ENCODE measurements at regions of chr2 and their contacts with region 1.

Region 1: DNA sequence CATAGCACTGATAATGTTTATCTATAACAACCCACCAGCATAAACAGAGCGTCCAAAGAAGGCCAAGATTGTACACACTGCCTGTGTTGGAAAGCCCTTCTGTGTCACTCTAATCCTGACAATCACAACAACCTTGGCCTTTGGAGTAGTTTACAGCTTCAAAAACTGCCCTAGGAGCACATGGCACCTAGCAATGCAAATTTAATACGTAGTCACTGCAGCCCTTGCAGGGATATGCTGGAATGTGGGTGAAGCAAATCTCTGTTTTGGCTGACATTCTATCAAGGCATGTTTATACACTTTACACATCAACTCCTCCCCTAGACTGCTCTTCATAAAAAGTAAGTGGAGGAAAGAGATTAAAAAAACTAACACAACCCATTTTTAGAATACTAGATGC is 66.8 kb downstream of the GRB14 start:
- DNase-seq: no peak
- ATAC-seq: no peak

Region 2: GRCh38 chr2:164015328-164016123 is 539.0 kb before region 1 on chr2:
- intact Hi-C with region 1: no loop called
- DNase-seq: no peak
- ATAC-seq: no peak

Region 3: DNA sequence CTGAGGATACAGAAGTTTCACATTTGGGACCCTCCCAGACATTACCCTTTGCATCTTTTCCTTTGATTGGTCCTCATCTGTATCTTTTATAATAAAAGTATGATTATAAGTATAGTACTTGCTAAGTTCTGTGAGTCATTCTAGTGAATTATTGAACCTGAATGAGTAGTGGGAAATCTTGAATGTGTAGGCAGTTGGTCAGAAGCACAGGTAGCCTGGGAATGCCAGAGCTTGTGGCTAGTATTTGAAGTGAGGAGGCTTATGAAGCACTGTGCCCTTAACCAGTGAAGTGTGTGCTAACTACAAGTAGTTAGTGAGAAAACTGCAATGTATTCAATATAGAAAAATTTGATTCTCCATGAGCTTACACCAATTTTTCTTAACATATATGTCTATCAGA is 190.8 kb before region 1 on chr2:
- intact Hi-C with region 1: no loop called
- DNase-seq: no peak
- ATAC-seq: no peak

Region 4: DNA sequence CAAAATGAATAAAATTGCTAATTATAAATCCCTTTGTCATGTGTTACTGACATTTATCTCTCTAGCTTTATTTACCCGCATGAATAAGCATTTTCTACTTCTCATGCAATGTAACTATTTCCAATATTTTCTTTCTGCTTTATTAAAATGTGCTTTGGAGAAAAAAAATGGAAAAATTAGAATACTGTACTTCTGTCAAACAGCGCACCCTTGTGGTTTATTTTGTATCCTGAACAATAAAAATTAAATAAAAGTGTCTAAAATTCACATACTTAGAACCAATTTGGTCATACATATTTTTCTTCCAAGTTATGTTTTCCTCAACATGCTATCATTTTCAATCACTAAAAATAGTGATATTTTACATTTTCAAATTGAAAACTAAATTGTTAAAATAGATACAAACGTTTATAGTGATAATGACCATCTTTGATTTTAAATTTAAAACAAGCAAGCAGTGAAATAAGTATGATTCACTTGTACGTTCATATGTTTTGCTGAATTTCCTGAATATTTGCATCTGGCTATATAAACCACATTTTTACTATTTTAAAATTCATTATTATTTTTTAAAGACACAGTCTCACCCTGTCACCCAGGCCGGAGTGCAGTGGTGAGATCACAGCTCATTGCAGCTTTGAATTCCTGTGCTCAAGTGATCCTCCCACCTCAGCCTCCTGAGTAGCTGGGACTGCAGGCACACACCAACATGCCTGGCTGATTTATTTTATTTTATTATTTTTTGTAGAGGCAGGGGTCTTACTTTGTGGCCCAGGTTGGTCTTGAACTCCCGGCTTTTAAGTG is 162.7 kb after region 1 on chr2:
- intact Hi-C with region 1: loop called in 1 of 2 experiments (anchors 10 kb)
- DNase-seq: no peak
- ATAC-seq: no peak

Region 5: DNA sequence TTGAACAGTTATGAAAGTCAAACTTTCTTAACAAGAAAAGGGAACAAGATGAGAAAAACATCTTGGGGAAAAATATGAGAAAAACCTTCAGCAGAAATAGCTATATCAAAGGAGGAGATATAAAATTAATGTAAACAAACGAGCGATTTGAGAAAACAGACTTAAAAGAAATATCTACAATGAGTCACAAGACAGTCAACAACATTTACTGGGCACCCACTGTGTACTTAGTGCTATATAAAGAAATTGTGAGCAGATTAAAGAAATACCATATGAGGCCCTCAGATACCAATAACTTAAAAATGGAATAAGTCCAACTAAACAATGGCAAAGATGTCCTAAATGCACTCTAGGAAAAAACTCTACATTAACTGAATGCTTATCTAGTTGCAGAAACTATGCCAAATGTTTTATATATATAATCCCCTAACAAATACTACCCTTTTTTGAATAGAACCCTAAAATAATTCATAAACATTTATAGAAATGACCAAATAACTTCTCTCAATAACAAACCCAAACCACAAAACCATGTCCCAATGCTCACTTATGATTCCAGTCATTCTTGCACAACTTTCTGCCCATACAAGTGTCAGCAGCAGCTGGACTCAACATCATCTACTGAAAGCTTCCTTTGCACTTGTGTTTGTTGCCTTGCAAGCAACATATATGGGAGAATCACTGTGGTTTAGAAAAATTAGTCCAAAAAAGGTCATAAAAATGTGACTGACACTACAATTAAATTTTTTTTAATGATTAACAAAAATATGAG is 203.6 kb after region 1 on chr2:
- intact Hi-C with region 1: no loop called
- DNase-seq: no peak
- ATAC-seq: peak; percentile 40

Measured in left colon (tissue), 2 donors.